Aorta (tissue), 5 donors: ENCODE measurements at regions of chr2 and their contacts with region 1.

Region 1: DNA sequence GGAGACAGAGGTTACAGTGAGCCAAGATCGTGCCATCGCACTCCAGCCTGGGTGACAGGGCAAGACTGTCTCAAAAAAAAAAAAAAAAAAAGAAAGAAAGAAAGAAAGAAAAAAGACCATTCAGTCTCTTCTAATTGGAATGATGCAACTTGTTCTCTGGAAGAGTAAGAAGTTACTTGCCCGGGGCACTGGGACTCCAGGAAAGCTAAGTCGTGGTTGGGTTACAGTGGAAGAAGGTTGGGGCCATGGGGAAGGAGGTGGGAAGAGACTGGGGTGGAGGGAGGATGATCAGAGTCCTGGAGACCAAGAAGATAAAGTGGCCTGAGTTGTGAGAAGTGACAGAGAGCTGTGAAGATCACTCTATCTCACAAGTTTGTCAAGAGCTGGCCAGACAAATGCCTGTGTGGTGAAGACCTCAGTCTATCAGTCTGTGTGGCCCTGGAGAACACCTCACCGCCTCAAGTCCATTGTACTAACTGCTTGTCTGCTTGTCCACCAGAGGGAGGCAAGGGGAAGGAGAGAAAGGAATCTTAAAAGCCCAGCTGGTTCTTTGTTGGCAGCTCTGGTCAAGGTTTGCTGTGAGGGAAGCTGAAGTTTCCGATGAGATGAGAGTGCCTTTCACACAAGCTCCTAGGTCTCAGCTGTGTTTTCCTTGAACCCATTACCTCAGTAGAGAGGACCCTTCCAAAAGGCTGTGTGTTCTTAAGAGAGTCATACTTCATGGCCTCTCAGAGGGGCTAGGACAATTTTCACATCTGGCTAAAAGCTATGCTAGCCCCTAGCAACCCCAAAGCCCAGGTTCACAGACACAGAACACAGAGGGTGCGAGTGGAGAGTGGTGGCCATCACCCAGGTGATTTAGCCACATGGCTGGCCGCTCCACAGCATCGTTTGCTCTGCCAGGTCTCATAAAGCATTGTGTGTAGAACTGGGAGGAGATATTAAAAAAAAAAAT is 72.0 kb upstream of the TMEM178A start:
- DNase-seq: peak in 1 of 2 donors; percentile 60
- ATAC-seq: peak; percentile 79
- H3K4me3 ChIP-seq: no peak overlapping the region
- H3K27ac ChIP-seq: no peak overlapping the region
- H3K4me1 ChIP-seq: no peaks in the 10 kb centered on the region
- H3K27me3 ChIP-seq: no peaks in the 10 kb centered on the region

Region 2: GRCh38 chr2:39696838-39697237 is 103.1 kb after region 1 on chr2:
- intact Hi-C with region 1: loop called in 1 of 2 experiments (anchors 10 kb)
- DNase-seq: no peak
- ATAC-seq: peak; percentile 60
- H3K4me3 ChIP-seq: no peak overlapping the region
- H3K27ac ChIP-seq: peak overlapping the region in 1 of 2 donors; percentile 30
- H3K4me1 ChIP-seq: no peaks in the 10 kb centered on the region
- H3K27me3 ChIP-seq: no peaks in the 10 kb centered on the region